ENCODE measurements at regions of chr1 and their contacts with region 1.

Region 1: GRCh38 chr1:99119188-99119587 is 114.5 kb upstream of the PLPPR5 start:
- DNase-seq: no peak
- H3K4me3 ChIP-seq: no peak overlapping the region
- CTCF ChIP-seq: no peak
- POLR2A ChIP-seq: no peak

Region 2: DNA sequence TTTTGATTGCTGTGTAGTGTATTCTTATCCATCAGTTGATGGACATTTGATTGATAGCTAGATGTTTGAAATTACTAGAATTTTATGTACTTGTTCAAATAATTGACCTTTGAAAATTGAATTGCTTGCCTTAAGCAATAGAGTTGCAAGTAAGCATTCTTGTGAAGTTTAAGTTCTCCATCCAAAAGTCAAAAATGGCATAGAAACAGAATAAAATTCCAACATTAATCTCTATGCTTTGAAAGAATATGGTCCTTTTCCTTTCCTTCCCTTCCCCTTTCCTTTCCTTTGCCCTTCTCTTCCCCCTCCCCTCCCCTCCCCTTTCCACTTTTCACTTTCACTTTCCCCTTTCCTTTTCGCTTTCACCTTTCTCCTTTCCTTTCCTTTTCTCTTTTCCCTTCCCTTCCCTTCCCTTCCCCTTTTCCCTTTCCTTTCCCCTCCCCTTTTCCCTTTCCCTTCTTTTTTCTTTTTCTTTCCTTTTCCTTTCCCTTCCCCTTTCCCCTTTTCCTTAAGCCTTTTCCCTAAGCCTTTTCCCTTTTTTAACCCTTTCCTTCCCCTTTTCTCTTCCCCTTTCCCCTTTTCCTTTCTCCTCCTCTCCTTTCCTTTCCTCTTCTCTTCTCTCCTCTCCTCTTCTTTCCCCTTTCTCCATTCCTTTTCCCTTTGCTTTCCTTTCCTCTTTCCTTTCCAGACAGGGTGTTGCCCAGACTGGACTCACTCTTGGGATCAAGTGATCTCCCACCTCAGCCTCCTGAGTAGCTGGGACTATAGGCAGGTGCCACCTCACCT is 946.2 kb after region 1 on chr1:
- intact Hi-C with region 1: loop called (anchors 5 kb)
- DNase-seq: no peak
- H3K4me3 ChIP-seq: no peak overlapping the region
- CTCF ChIP-seq: no peak
- POLR2A ChIP-seq: no peak

Measured in lower leg skin (tissue), 4 donors.